ENCODE measurements at regions of chr13 and their contacts with region 1.

Region 1: GRCh38 chr13:114226699-114227323 is 7.9 kb upstream of the CDC16 start:
- DNase-seq: peak; percentile 93
- H3K4me3 ChIP-seq: no peak overlapping the region
- H3K27ac ChIP-seq: no peak overlapping the region
- H3K4me1 ChIP-seq: peaks cover 3 to 4% of the 10 kb centered on the region in 2 donors
- H3K27me3 ChIP-seq: no peaks in the 10 kb centered on the region
- CTCF ChIP-seq: peak; percentile 84 to 99 (median 96)
- POLR2A ChIP-seq: no peak

Region 2: GRCh38 chr13:113816946-113817859 is 409.6 kb before region 1 on chr13:
- intact Hi-C with region 1: loop called (anchors 5 kb)
- DNase-seq: peak; percentile 96 to 97
- H3K4me3 ChIP-seq: no peak overlapping the region
- H3K27ac ChIP-seq: peak overlapping the region in 2 of 3 donors; percentile 42 to 71
- H3K4me1 ChIP-seq: peaks cover 42 to 71% of the 10 kb centered on the region in 2 donors
- H3K27me3 ChIP-seq: no peaks in the 10 kb centered on the region
- CTCF ChIP-seq: peak; percentile 45 to 94 (median 86)
- POLR2A ChIP-seq: no peak

Region 3: DNA sequence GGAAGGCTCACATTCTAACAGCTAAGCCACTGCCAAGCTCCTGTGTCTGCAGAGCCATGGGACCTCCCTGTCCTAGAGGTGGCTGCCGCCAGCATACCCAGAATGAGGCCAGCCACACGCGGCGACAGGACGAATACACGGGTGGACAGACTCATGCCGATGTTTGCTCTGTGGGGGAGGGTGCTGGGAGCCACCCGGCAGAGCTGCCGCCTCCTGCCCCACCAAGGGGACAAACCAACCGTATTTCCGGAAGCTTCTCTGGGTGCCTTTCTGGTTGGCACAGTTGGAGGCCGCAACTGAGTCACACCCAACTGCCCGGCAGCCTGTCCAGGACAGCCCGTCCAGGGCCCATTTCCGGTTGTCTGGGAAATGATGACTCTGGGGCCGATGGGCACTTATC is 273.2 kb before region 1 on chr13:
- intact Hi-C with region 1: loop called (anchors 2 kb)
- DNase-seq: no peak
- H3K4me3 ChIP-seq: no peak overlapping the region
- H3K27ac ChIP-seq: no peak overlapping the region
- H3K4me1 ChIP-seq: peaks cover 0 to 11% of the 10 kb centered on the region in 2 donors
- H3K27me3 ChIP-seq: no peaks in the 10 kb centered on the region
- CTCF ChIP-seq: no peak
- POLR2A ChIP-seq: no peak

Region 4: DNA sequence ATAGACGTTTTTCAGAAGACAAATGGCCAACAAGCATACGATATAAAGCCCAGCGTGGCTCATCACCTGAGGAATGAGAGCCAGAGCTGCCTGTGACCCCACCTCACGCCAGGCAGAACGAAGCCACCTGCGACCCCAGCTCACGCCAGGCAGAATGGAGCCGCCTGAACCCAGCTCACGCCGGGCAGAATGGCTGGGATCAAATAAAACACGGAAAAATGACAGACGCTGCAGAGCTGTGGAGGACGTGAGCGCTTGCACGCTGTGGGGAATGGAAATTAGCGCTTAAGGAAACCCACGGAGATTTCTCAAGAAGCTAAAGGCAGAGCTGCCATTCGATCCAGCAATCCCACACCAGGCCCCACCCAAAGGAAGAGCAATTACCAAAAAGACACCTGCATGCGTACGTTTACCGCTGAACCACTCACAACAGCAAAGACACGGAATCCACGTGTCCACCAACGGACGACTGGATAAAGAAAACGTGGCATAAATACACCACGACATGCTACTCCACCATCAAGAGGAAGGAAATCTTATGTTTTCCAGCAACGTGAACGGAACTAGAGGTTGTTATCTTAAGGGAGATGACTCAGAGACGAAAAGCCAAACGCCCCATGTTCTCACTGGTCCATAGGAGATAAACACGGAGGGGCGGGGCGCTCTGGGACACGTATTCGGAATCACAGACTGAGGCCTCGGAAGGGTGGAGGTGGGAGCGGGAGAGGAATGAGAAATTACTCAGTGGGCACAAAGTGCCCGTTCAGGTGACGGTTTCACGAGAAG is 222.2 kb before region 1 on chr13:
- intact Hi-C with region 1: no loop called
- DNase-seq: peak; percentile 0 to 5
- H3K4me3 ChIP-seq: no peak overlapping the region
- H3K27ac ChIP-seq: no peak overlapping the region
- H3K4me1 ChIP-seq: peaks cover 6 to 18% of the 10 kb centered on the region in 2 donors
- H3K27me3 ChIP-seq: no peaks in the 10 kb centered on the region
- CTCF ChIP-seq: no peak
- POLR2A ChIP-seq: no peak

Measured in thyroid gland (tissue), 4 donors.